Spleen (tissue), 13 donors: ENCODE measurements at regions of chr11 and their contacts with region 1.

Region 1: GRCh38 chr11:128630367-128631230 is 43.2 kb upstream of the ETS1 start:
- DNase-seq: peak; percentile 96
- H3K4me3 ChIP-seq: no peak overlapping the region
- H3K27ac ChIP-seq: peak overlapping the region; percentile 74 to 93 (median 83)
- H3K4me1 ChIP-seq: peaks cover 42 to 72% (median 65%) of the 10 kb centered on the region in 6 donors
- H3K27me3 ChIP-seq: no peaks in the 10 kb centered on the region
- CTCF ChIP-seq: peak; percentile 74 to 97 (median 93)
- POLR2A ChIP-seq: no peak

Region 2: DNA sequence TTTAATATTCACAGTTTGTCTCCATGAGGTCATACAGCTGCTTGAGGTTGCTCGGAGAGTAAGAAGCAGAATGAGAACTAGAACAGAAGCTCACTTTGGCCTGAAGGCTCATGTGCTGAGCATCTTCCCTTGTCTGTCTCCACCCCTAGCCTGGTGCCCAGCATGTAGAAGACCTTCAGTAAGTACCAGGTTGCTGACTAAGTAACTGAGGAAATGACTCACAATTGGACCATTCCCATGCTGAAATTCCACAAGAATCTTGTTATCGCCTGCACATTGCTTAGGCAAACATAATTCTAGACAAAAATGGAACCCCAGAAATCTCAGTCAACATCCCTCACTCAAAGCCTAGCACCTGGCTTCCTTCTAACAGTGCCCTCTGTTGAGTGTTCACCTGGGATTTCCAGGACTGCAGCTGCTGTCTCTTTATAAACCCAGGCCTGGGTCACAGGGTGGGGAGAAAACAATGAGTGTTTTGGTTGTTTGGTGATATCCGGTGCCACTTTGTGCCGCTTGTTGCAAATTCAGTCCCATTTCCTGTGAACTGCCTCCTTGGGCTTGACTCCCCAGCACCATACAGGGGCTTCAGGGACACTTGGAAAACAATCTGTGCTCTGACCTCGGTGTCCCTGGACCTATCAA is 450.0 kb before region 1 on chr11:
- intact Hi-C with region 1: loop called (anchors 5 kb)
- DNase-seq: no peak
- H3K4me3 ChIP-seq: no peak overlapping the region
- H3K27ac ChIP-seq: peak overlapping the region; percentile 1 to 85 (median 68)
- H3K4me1 ChIP-seq: peaks cover 0 to 20% (median 12%) of the 10 kb centered on the region in 6 donors
- H3K27me3 ChIP-seq: no peaks in the 10 kb centered on the region
- CTCF ChIP-seq: no peak
- POLR2A ChIP-seq: no peak

Region 3: GRCh38 chr11:128289048-128289447 is 341.6 kb before region 1 on chr11:
- intact Hi-C with region 1: loop called (anchors 5 kb)
- DNase-seq: no peak
- H3K4me3 ChIP-seq: no peak overlapping the region
- H3K27ac ChIP-seq: peak overlapping the region in 5 of 8 donors; percentile 86 to 94 (median 88)
- H3K4me1 ChIP-seq: peaks cover 32 to 73% (median 47%) of the 10 kb centered on the region in 6 donors
- H3K27me3 ChIP-seq: no peaks in the 10 kb centered on the region
- CTCF ChIP-seq: no peak
- POLR2A ChIP-seq: no peak

Region 4: DNA sequence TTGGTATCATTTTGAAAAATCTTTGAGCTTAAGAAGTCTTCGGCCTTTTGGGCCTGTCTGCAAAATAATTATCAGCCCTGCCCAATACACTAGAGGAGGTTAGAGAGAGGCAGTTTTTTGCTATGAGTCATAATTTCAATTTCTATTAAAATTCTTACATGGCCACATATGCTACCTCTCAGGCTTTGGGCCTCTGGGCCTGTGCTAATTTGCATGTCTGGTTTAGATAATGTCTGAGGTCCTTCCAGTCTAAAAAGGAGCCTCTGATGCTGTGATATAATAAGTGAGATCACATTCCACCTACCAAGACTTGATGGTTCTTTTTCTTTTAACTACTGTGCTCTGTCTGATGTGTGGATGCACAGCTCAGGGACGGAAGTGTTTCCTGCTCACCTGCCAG is 165.7 kb after region 1 on chr11:
- intact Hi-C with region 1: no loop called
- DNase-seq: no peak
- H3K4me3 ChIP-seq: no peak overlapping the region
- H3K27ac ChIP-seq: peak overlapping the region in 2 of 8 donors; percentile 4 to 67
- H3K4me1 ChIP-seq: peaks cover 0 to 63% (median 12%) of the 10 kb centered on the region in 6 donors
- H3K27me3 ChIP-seq: no peaks in the 10 kb centered on the region
- CTCF ChIP-seq: no peak
- POLR2A ChIP-seq: no peak